Prostate gland (tissue), 2 donors: ENCODE measurements at regions of chr19 and their contacts with region 1.

Region 1: GRCh38 chr19:32224371-32225244 is 120.8 kb upstream of the ZNF507 start:
- DNase-seq: peak; percentile 23
- H3K4me3 ChIP-seq: no peak overlapping the region
- H3K27ac ChIP-seq: no peak overlapping the region
- H3K4me1 ChIP-seq: peaks cover 5% of the 10 kb centered on the region
- H3K27me3 ChIP-seq: no peaks in the 10 kb centered on the region
- CTCF ChIP-seq: peak; percentile 96 to 100 (median 98)
- POLR2A ChIP-seq: no peak

Region 2: DNA sequence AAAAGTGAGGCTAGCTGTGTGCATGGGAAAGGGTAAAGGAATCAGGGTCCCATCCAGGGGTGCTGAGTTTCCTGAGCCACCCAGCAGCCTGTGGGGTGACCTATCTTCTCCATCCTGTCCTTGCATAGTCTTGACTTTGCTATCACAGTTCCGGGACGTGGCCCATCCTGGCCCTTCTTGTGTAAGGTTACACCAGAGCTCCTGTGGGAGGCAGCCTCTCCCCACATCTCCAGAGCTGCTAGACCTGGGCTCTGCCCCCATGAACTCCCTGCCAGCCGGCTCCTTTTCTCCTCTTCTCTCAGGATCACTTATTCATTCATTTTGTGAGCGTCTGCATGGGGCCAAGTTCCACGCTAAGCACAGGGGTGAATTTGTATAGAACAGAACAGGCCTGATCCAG is 1114.3 kb before region 1 on chr19:
- intact Hi-C with region 1: loop called (anchors 10 kb)
- DNase-seq: no peak
- H3K4me3 ChIP-seq: no peak overlapping the region
- H3K27ac ChIP-seq: no peak overlapping the region
- H3K4me1 ChIP-seq: no peaks in the 10 kb centered on the region
- H3K27me3 ChIP-seq: no peaks in the 10 kb centered on the region
- CTCF ChIP-seq: peak in 1 of 4 experiments; percentile 8
- POLR2A ChIP-seq: no peak

Region 3: DNA sequence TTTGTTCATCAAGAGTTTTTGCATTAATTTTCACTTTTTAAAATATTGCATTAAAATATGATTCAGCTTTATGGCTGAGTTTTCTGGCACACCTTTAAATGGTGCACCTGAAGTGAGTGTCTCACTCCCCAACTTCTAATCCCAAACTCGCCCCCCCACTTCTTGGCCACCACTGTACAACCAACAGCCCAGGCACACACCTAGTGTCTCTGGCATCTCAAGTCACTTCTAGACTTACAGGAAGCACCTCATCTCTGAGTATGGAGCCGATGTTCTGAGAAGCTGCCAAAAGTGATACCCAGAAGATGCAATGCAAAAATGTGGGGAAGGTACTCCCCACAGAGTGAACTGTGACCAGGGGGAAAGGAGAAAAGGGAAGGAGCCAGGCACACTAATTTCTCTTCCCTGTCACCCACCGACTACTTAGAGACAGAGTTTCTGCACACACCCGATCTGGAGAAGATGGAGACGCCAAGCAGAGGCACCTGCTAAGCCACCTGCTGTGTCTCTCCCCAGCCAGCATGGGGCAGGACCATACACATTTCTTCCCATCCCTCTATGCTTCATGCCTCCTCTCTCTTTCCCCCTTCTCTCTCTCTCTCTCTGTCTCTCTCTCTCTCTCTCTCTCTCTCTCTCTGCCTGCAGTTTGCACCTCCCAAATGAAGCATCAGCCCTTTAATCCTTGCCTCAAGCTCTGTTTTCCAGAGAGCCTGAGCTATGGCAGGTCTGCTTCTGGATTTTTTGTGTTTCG is 34.5 kb before region 1 on chr19:
- intact Hi-C with region 1: no loop called
- DNase-seq: no peak
- H3K4me3 ChIP-seq: no peak overlapping the region
- H3K27ac ChIP-seq: no peak overlapping the region
- H3K4me1 ChIP-seq: no peaks in the 10 kb centered on the region
- H3K27me3 ChIP-seq: no peaks in the 10 kb centered on the region
- CTCF ChIP-seq: no peak
- POLR2A ChIP-seq: no peak